PC-9 (cell line): ENCODE measurements at regions of chr7 and their contacts with region 1.

Region 1: GRCh38 chr7:140625908-140626868 is 14.4 kb downstream of the DENND2A start:
- DNase-seq: peak; percentile 95 to 98
- H3K4me3 ChIP-seq: no peak overlapping the region
- H3K27ac ChIP-seq: peak overlapping the region; percentile 79
- H3K4me1 ChIP-seq: peaks cover 75% of the 10 kb centered on the region
- H3K27me3 ChIP-seq: no peaks in the 10 kb centered on the region
- CTCF ChIP-seq: no peak

Region 2: DNA sequence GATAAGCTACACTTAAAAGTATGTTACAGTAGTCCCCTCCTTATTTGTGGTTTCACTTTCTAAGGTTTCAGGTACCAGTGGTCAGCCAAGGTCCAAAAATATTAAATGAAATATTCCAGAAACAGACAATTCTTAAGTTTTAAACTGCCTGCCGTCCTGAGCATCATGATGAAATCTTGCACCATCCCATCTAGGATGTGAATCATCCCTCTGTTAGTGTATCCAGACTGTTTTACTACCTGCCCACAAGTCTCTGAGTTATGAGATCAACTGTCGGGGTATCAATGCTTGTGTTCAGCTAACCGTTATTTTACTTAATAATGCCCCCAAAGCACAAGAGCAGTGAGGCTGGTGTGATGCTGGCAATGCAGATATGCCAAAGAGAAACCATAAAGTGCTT is 460.8 kb before region 1 on chr7:
- CTCF ChIA-PET with region 1: interaction called, 18 read pairs
- POLR2A ChIA-PET with region 1: no interaction called
- intact Hi-C with region 1: no loop called
- DNase-seq: peak in 1 of 2 experiments; percentile 44
- H3K4me3 ChIP-seq: no peak overlapping the region
- H3K27ac ChIP-seq: peak overlapping the region; percentile 61
- H3K4me1 ChIP-seq: peaks cover 19% of the 10 kb centered on the region
- H3K27me3 ChIP-seq: no peaks in the 10 kb centered on the region
- CTCF ChIP-seq: no peak

Region 3: DNA sequence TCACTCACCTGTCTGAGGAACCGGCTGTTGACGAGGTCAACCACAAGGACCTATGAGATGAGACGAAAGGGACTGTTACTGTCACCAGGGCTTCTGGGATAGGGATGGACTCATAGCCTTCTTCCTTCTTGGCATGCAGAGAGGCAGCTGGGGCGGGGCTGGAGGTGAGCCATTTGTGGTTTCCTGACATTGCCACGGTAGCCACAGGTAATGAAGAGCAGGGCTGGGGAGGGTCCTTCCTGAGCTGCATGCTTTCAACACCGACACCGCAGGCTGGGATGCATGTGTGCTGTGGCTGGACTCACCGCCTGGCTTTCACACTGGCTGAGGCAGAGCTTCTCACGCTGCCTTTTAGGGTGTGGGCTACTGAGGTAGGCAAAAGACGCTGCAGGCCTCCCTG is 100.4 kb before region 1 on chr7:
- CTCF ChIA-PET with region 1: interaction called, 5 read pairs
- POLR2A ChIA-PET with region 1: interaction called, 7 read pairs
- intact Hi-C with region 1: loop called (anchors 2 kb)
- DNase-seq: peak; percentile 65 to 86
- H3K4me3 ChIP-seq: no peak overlapping the region
- H3K27ac ChIP-seq: no peak overlapping the region
- H3K4me1 ChIP-seq: peaks cover 16% of the 10 kb centered on the region
- H3K27me3 ChIP-seq: no peaks in the 10 kb centered on the region
- CTCF ChIP-seq: no peak

Region 4: DNA sequence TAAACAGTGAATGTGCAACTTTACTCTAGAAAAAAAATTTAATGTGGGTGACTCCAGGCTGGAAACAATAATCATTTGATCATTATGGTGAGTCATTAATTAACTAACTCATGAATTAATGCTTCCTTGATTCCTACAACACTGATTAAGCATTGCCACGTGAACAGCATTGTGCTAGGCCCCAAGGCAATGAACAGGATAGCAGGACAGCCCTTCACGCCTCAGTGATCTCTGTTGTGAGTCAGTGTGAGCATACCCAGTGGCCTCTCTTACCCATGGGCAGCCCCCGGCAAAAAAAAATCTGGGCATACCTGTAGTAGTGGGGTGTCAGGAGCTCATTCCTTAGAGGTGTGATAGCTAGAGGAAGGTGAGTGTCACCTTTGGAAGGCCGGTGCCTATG is 61.5 kb before region 1 on chr7:
- CTCF ChIA-PET with region 1: no interaction called
- POLR2A ChIA-PET with region 1: interaction called, 3 read pairs
- intact Hi-C with region 1: loop called (anchors 2 kb)
- DNase-seq: peak; percentile 88 to 99
- H3K4me3 ChIP-seq: no peak overlapping the region
- H3K27ac ChIP-seq: peak overlapping the region; percentile 68
- H3K4me1 ChIP-seq: peaks cover 61% of the 10 kb centered on the region
- H3K27me3 ChIP-seq: no peaks in the 10 kb centered on the region
- CTCF ChIP-seq: no peak

Region 5: DNA sequence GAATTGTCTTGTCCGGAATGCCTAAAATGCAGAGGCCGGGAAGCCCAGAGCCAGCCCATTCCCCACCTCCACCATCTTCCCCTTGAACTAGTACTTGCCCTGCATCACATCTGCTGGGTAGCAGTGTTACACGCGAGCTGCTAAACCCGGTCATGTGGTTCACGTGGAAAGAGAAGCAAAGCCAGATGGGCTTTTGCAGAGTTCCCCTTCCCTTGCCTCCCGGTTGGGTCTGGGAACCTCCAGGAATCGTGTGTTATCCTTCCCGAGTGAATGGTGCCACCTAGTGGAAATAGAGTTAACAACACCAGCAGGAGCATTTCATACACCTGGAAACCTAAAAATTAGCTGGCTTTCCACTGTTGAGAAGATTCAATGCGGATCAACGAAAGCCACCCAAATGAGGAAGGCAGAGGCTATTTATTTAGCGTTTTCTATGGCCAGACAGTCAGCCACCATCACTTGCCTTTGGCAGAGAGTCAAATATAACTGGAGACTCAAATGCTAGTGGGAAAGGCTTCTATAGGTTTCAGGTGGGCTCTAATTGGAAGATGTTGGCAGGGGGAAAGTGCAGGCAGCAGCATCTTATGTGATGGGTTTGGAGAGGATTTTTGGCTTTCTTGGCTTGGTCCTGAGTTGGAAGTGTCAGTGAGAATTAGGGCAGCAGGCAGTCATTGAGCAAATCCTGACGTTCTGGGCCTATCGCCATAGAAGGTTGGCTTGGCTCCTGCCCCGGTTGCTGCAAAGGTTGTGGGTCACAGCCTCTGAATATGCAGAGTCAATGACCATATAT is 27.3 kb after region 1 on chr7:
- CTCF ChIA-PET with region 1: interaction called, 6 read pairs
- POLR2A ChIA-PET with region 1: interaction called, 26 read pairs
- intact Hi-C with region 1: no loop called
- DNase-seq: peak; percentile 63 to 64
- H3K4me3 ChIP-seq: no peak overlapping the region
- H3K27ac ChIP-seq: no peak overlapping the region
- H3K4me1 ChIP-seq: peaks cover 55% of the 10 kb centered on the region
- H3K27me3 ChIP-seq: no peaks in the 10 kb centered on the region
- CTCF ChIP-seq: peak; percentile 95

Region 6: DNA sequence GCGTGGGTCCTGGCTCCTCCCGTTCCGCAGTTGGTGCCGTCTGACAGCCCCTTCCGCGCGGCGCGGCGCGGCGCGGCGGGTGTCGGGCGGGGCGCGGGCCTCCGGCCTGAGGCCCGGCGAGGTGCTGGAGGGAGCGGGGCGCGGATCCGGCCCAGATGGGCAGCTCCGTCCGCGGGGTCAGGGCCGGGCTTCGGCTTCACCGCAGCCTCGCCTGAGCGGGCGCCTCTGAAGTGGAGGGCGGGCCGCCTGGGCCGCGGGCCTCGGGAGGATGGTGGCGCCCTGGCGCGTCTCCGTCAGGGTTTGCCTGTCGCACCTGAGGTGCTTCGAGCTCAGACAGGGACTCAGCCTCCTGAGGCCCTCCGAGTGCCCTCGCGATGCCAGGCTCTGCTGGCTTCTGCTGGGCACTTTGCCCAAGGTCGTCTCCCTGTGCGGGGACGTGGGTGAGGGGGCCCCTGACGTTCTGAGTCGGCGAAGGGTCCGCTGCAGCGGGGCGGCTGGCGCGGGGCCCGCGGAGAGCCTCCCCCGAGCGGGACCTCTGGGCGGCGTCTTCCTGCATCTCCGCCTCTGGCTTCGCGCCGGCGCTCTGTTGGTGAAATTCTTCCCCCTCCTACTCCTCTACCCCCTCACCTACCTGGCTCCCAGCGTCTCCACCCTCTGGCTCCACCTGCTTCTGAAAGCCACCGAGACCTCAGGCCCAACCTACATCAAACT is 47.0 kb after region 1 on chr7:
- CTCF ChIA-PET with region 1: no interaction called
- POLR2A ChIA-PET with region 1: no interaction called
- intact Hi-C with region 1: no loop called
- DNase-seq: peak; percentile 56 to 77
- H3K4me3 ChIP-seq: peak overlapping the region; percentile 79
- H3K27ac ChIP-seq: peak overlapping the region; percentile 26; the same call in 1 of the 2 replicates
- H3K4me1 ChIP-seq: peaks cover 31% of the 10 kb centered on the region
- H3K27me3 ChIP-seq: no peaks in the 10 kb centered on the region
- CTCF ChIP-seq: no peak; the same call in 1 of the 2 replicates